Activated CD4-positive, alpha-beta T cell treated with anti-CD3 and anti-CD28 coated beads for 36 hours (primary cell): ENCODE measurements at regions of chr7 and their contacts with region 1.

Region 1: DNA sequence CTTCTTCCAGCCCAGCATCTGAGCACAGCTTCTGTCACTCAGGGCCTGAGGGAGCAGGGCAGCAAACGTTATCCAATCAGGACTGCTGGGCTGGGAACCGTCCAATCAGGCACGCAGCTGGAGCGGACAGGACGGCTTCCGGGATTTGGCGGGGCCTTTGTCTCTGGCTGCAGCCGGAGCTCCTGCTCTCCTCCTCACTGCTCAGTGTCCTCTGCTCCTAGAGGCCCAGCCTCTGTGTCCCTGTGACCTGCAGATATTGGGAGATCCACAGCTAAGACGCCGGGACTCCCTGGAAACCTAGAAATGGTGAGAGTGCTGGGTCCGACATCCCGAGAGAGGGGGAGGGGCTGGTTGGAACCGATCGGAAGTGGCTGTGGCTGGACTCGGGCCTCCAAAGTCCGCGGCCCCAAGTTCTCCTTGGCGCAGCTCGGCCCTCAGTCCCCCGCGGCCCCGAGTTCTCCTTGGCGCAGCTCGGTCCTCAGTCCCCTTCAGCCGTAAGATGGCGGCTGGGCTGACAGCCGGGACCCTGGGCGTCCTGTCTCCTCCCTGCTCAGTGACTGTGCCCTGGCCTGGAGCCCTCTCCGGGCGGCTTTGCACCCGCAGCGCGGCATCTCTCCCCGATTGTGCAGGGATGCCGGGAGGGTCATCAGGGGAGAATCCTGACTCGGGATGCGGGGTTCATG is at the start of gene ZNF107:
- DNase-seq: peak; percentile 92
- ATAC-seq: peak; percentile 100
- H3K4me3 Mint-ChIP-seq: peak within 1 kb of the TSS; percentile 95
- H3K27ac Mint-ChIP-seq: peak within 1 kb of the TSS; percentile 97
- H3K4me1 Mint-ChIP-seq: peaks cover 48% of the 10 kb centered on the region
- H3K27me3 Mint-ChIP-seq: no peaks in the 10 kb centered on the region
- total RNA-seq, gene ZNF107: 16.5 to 19.7 TPM

Region 2: DNA sequence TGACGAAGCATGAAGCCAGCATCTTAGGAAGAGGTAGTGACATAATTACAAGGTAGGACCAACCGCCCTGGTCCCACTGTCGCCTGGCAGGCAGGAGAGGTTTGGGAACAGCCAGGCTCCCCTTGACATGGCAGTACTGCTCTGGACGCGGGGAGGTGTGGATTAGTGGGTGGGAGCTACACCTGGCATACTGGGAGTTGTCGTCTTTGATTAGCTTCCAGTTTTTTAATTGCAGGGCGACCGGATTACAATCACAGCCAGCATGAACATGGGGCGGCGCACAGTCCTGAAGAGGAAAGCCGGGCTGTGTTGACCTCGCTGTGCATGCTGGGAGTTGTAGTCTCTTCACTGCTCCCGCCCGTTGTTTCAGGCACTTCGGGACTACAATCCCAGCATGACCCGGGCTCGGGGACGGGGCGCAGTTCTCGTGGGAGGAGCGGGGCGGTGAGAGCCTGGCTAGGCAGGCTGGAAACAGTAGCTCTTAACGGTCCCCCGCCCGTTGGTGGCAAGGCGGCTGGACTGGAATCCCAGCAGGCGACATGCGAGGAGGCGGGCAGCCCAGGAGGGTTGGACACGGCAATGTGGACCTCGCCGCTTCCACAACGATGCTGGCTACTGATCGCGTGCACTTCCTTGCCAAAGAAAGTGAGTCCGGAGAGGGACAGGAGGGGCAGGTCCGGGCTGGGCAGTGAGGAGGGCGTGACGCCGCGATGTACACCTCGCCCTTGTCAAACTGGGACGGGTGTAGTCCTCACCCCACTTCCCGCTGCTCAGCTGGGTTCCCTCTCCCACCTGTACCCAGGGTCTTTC is 765.5 kb before region 1 on chr7:
- CTCF ChIA-PET with region 1: interaction called, 3 read pairs
- POLR2A ChIA-PET with region 1: no interaction called
- intact Hi-C with region 1: loop called in 1 of 2 experiments (anchors 1 kb)
- DNase-seq: peak; percentile 96
- ATAC-seq: peak; percentile 96
- H3K4me3 Mint-ChIP-seq: peak overlapping the region; percentile 85
- H3K27ac Mint-ChIP-seq: peak overlapping the region; percentile 77
- H3K4me1 Mint-ChIP-seq: no peaks in the 10 kb centered on the region
- H3K27me3 Mint-ChIP-seq: no peaks in the 10 kb centered on the region

Region 3: DNA sequence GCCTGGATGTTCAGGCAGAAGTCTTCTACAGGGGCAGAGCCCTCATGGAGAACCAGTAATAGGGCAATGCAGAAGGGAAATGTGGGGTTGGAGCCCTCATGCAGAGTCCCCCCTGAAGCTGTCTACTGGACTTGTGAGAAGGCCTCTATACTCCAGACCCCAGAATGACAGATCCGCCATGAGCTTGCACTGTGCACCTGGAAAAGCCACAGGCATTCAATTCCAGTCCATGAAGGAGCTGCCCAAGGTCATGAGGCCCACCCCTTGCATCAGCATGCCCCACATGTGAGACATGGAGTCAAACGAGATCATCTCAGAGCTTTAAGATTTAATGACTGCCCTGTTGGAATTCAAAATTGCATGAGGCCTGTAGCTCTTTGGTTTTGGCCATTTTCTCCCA is 442.8 kb before region 1 on chr7:
- CTCF ChIA-PET with region 1: no interaction called
- POLR2A ChIA-PET with region 1: no interaction called
- intact Hi-C with region 1: no loop called
- DNase-seq: no peak
- ATAC-seq: no peak
- H3K4me3 Mint-ChIP-seq: no peak overlapping the region
- H3K27ac Mint-ChIP-seq: no peak overlapping the region
- H3K4me1 Mint-ChIP-seq: no peaks in the 10 kb centered on the region
- H3K27me3 Mint-ChIP-seq: no peaks in the 10 kb centered on the region

Region 4: DNA sequence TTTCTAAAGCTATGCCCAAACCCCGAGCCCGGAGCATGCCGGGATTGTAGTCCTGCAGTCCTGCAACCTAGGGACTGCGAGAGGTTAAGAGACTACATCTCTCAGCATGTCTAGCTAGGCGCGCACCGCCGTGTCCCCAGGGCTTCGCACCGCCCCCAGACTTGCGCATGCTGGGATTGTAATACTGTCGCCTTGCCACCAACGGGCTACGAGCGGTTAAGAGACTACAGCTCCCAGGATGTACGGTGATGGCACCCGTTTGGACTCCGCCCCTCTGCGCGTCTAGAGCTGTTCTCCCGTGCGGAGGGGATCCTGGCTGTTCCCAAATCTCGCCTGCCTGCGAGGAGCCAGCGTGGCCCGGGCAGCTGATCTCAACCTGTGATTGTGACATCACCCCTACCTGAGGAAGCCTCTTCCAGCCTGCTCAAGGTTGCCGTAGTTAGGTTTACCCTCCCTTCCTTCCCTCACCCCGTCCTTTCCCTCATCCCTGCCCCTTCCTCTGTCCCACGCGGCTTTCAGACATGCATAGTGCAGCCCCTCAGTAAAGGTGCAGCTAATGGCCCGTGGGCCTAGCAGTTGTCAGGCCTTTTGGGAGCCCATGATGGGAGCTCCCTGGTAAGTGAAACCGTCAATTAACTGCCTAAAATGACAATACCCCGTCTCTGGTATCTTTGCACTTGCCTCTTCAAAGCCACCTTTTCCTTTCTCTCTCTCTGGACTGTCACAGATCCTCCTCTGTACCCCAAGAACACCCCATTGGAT is 358.7 kb before region 1 on chr7:
- CTCF ChIA-PET with region 1: no interaction called
- POLR2A ChIA-PET with region 1: no interaction called
- intact Hi-C with region 1: loop called (anchors 2 to 5 kb)
- DNase-seq: peak; percentile 95
- ATAC-seq: peak; percentile 97
- H3K4me3 Mint-ChIP-seq: peak overlapping the region; percentile 84
- H3K27ac Mint-ChIP-seq: peak overlapping the region; percentile 91
- H3K4me1 Mint-ChIP-seq: peaks cover 25% of the 10 kb centered on the region
- H3K27me3 Mint-ChIP-seq: no peaks in the 10 kb centered on the region

Region 5: DNA sequence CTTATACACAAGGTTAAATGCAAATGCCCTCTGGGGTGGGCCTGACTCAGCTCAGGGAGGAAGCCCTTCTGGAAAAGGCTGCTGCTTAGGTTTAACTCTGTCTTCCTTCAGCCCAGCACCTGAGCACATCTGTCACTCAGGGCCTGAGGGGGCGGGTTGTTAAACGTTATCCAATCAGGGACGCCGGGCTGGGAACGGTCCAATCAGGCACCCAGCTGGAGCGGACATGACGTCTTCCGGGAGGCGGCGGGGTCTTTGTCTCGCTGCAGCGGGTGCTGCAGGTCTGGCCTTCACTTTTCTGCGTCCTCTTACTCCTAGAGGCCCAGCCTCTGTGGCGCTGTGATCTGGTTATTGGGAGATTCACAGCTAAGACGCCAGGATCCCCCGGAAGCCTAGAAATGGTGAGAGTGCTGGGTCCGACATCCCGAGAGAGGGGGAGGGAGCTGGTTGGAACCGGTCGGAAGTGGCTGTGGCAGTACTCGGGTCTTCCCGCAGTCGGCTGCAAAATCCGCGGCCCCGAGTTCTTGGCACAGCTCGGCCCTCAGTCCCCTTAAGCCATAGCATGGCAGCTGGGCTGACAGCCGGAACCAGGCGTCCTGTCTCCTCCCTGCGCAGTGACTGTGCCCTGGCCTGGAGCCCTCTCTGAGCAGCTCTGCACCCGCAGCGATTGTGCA is 128.2 kb after region 1 on chr7 and contains the start of gene ZNF138:
- CTCF ChIA-PET with region 1: no interaction called
- POLR2A ChIA-PET with region 1: no interaction called
- intact Hi-C with region 1: loop called (anchors 1 kb)
- DNase-seq: peak; percentile 97
- ATAC-seq: peak; percentile 100
- H3K4me3 Mint-ChIP-seq: peak within 1 kb of the TSS; percentile 97
- H3K27ac Mint-ChIP-seq: peak within 1 kb of the TSS; percentile 99
- H3K4me1 Mint-ChIP-seq: peaks cover 23% of the 10 kb centered on the region
- H3K27me3 Mint-ChIP-seq: no peaks in the 10 kb centered on the region
- total RNA-seq, gene ZNF138: 12.0 to 19.6 TPM

Region 6: DNA sequence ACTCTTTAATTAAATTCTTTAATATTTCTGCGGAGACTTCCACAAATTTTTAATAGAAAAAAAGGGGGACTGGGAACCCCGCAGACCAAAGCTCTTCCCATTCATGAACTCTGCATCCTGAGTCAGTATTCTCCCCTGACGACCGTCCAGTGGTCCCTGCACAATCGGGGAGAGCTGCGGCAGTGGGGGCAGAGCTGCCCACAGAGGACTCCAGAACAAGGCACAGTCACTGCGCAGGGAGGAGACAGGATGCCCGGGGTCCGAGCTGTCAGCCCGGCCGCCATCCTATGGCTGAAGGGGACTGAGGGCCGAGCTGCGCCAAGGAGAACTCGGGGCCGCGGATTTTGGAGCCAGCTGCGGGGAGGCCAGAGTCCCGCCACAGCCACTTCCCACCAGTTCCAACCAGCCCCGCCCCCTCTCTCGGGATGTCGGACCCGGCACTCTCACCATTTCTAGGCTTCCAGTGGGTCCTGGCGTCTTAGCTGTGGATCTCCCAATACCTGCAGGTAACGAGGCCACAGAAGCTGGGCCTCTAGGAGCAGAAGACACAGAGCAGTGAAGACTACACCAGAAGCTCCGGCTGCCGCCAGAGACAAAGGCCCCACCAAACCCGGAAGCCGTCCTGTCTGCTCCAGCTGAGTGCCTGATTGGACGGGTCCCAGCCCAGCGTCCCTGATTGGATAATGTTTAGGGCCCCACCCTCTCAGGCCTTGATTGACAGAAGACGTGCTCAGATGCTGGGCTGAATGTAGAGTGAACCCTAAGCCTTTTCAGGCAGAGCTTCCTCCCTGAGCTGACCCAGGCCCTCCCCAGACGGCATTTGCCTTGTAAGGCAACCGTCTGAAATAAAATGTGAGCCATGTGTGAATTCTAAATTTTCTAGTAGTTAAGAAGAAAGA is 340.2 kb after region 1 on chr7 and contains the start of gene ERV3-1:
- CTCF ChIA-PET with region 1: no interaction called
- POLR2A ChIA-PET with region 1: interaction called, 4 read pairs
- intact Hi-C with region 1: loop called in 1 of 2 experiments (anchors 1 kb)
- DNase-seq: peak; percentile 95
- ATAC-seq: peak; percentile 100
- H3K4me3 Mint-ChIP-seq: peak within 1 kb of the TSS; percentile 94
- H3K27ac Mint-ChIP-seq: peak within 1 kb of the TSS; percentile 92
- H3K4me1 Mint-ChIP-seq: peaks cover 27% of the 10 kb centered on the region
- H3K27me3 Mint-ChIP-seq: no peaks in the 10 kb centered on the region
- total RNA-seq, gene ERV3-1: 6.3 to 8.9 TPM